Ovary (tissue), 10 donors: ENCODE measurements at regions of chr1 and their contacts with region 1.

Region 1: GRCh38 chr1:234722904-234723720 is 113.1 kb upstream of the IRF2BP2 start:
- DNase-seq: peak; percentile 61 to 87 (median 64)
- H3K4me3 ChIP-seq: no peak overlapping the region
- H3K27ac ChIP-seq: peak overlapping the region; percentile 53 to 99
- H3K4me1 ChIP-seq: peaks cover 53% of the 10 kb centered on the region
- H3K27me3 ChIP-seq: no peaks in the 10 kb centered on the region
- CTCF ChIP-seq: no peak
- EP300 ChIP-seq: no peak
- POLR2A ChIP-seq: no peak

Region 2: DNA sequence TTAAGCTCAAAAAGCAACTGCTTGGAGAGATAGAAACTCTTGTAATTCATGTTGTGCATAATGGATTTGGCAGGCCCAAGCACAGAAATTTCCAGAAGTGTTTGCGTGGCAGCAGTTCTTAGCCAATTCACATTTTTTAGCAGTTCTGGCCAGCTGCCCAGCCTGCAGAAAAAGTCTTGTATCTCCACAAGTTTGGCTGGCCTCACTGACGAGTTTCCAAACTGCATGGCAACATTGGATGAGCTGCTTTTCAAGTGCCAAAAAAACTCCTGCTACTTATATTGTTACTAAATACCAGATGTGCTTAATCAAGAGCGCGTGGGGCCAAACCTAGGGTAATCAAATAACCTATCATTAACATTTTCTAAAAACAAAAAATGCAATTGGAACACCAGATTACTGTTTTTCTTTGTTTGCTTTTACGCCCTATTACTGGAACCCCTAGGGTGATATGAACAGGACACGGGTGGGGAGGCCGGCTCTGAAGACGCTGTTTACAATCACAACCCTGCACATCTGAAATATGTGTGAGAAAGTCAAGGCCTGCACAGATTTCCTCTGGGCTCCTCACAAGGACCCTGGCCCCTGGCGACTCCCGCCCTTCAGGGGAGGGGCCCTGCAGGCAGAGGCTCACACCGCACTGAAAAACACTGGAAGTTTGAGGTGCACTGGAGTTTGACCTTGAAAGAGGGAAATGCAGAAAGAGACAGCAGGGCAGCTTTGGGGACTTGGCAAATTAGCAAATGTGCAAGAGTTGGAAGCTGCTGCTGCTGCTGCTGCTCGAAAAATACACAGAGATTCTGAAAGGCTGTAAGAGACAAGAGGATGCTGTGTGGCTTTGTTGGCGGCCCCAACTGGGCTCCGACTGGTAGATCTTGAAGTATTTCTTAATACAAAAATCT is 188.9 kb before region 1 on chr1:
- intact Hi-C with region 1: loop called in 3 of 4 experiments (anchors 2 to 10 kb)
- DNase-seq: peak; percentile 94 to 99 (median 98)
- H3K4me3 ChIP-seq: no peak overlapping the region
- H3K27ac ChIP-seq: peak overlapping the region; percentile 84 to 98
- H3K4me1 ChIP-seq: peaks cover 44% of the 10 kb centered on the region
- H3K27me3 ChIP-seq: no peaks in the 10 kb centered on the region
- CTCF ChIP-seq: no peak
- EP300 ChIP-seq: peak; percentile 29
- POLR2A ChIP-seq: no peak

Region 3: DNA sequence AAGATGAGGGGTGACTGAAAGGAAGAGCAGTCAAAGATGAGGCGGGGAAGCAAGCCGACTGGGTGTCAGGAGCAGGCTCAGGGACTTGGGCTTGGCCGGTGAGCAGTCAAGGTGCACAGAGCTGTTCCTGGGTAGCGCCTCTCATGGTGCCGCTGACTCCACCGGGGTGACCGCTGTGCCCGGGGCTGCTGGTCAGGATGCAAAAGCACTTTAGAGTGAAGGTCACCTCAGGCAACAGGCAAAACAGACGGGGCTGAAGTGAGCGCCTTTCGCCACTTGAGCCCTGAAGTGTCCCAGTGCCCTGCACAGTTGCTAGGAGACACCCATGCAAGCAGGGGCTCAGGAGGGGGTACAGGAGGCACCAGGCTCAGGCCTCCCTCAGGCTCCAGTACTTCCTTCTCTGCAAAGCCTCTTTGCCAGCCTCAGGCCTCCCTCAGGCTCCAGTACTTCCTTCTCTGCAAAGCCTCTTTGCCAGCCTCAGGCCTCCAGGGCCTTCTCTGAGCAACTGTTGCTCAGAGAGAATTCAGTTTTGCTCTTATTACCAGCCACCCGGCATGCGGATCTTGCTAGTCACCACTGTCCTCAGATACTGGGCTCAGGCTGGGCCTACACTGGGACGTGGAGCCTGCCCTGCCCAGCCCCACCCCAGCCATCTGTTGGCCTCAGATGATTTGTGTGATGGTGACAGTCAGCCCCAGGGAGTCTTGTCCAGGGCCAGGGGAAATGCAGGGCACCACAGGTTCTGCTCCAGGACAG is 13.5 kb before region 1 on chr1:
- intact Hi-C with region 1: no loop called
- DNase-seq: no peak
- H3K4me3 ChIP-seq: no peak overlapping the region
- H3K27ac ChIP-seq: no peak overlapping the region
- H3K4me1 ChIP-seq: no peaks in the 10 kb centered on the region
- H3K27me3 ChIP-seq: no peaks in the 10 kb centered on the region
- CTCF ChIP-seq: no peak
- EP300 ChIP-seq: no peak
- POLR2A ChIP-seq: no peak

Region 4: GRCh38 chr1:234887016-234887900 is 164.1 kb after region 1 on chr1:
- intact Hi-C with region 1: loop called in 1 of 4 experiments (anchors 5 kb)
- DNase-seq: peak in 3 of 5 donors; percentile 49 to 51 (median 50)
- H3K4me3 ChIP-seq: no peak overlapping the region
- H3K27ac ChIP-seq: peak overlapping the region; percentile 69 to 78
- H3K4me1 ChIP-seq: peaks cover 10% of the 10 kb centered on the region
- H3K27me3 ChIP-seq: no peaks in the 10 kb centered on the region
- CTCF ChIP-seq: no peak
- EP300 ChIP-seq: no peak
- POLR2A ChIP-seq: no peak

Region 5: DNA sequence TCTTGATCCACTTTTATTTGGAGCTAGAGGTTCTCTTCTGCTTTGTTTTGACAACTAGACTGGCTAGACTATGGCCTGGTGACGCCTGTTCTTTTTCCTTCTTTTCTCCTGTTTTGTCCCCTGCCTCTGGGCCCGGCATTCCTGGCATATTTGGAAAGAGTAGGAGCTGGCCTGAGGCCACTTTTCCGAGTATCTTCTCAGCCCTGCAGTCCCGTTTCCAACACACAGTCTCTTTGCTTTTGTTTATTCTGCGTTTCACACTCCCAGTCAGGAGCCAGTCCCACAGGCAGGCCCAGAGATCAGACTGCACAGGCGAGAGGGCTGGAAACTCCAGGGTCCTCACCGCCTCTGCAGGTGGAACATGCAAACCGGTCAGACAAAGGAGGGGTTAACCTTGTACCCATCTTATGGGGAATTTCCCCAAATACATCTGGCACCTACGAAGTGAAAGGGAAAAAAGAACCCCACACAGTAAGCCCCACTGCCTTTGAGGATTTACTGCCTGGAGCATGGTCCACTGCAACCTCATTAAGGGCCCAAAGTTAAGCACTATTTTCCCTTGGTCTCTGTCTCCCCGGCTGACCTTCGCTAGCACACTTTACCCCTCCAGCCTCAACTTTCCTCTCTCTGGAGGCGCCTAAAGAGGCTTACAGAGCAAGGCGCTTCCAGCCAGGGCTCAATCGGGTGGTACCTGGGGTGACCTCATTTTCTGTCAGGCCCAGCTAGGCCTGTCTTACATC is 264.5 kb after region 1 on chr1:
- intact Hi-C with region 1: loop called in 1 of 4 experiments (anchors 5 kb)
- DNase-seq: peak; percentile 70 to 92 (median 82)
- H3K4me3 ChIP-seq: no peak overlapping the region
- H3K27ac ChIP-seq: peak overlapping the region; percentile 44 to 76
- H3K4me1 ChIP-seq: peaks cover 19% of the 10 kb centered on the region
- H3K27me3 ChIP-seq: no peaks in the 10 kb centered on the region
- CTCF ChIP-seq: no peak
- EP300 ChIP-seq: no peak
- POLR2A ChIP-seq: no peak

Region 6: DNA sequence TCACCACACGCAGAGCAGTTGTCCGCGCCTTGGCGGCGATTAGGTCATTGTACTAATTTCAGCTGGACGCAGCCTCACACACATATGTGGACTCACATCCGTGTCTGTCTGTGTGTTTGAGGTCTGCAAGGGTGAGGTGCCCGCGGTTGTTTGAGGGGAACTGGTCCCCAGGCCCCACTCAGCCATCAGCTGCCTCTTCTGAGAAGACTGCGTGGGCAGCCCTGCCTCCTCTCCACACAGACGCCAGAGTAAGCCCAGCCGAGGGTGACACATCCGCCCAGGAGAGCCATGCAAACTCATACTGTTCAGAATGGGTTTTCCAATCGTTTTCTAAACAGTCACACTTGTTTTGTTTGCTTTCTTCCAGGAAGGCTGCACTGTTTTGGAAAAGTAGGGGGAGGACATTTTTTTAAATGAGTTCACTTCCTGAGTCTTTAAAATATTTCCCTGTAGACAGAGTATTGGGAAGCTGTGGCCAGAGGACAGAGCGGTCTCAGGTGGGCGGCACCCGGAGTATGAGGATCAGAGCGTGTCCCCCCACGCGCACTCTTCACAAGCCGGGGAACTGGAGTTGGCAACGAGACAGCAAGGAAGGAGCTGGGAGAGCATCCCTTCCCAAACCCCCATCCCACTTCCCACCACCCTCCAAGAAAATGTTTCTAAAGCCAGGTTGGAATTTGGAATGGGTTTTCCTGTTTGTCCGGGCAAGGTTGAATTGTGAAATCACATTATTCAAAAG is 352.2 kb after region 1 on chr1:
- intact Hi-C with region 1: loop called in 1 of 4 experiments (anchors 10 kb)
- DNase-seq: peak; percentile 69 to 79 (median 73)
- H3K4me3 ChIP-seq: no peak overlapping the region
- H3K27ac ChIP-seq: peak overlapping the region; percentile 32 to 68
- H3K4me1 ChIP-seq: peaks cover 11% of the 10 kb centered on the region
- H3K27me3 ChIP-seq: no peaks in the 10 kb centered on the region
- CTCF ChIP-seq: no peak
- EP300 ChIP-seq: peak; percentile 45
- POLR2A ChIP-seq: no peak